Dorsolateral prefrontal cortex (tissue), 120 donors: ENCODE measurements at regions of chr2 and their contacts with region 1.

Region 1: GRCh38 chr2:149313512-149313972 is 16.8 kb upstream of the LYPD6 start:
- DNase-seq: no peak
- H3K4me3 ChIP-seq: peak overlapping the region in 2 of 59 donors; percentile 14 to 32
- H3K27ac ChIP-seq: no peak overlapping the region
- H3K27me3 ChIP-seq: peaks cover 0 to 23% (median 4%) of the 10 kb centered on the region in 45 donors
- CTCF ChIP-seq: peak in 55 of 56 donors; percentile 35 to 78 (median 66)

Region 2: DNA sequence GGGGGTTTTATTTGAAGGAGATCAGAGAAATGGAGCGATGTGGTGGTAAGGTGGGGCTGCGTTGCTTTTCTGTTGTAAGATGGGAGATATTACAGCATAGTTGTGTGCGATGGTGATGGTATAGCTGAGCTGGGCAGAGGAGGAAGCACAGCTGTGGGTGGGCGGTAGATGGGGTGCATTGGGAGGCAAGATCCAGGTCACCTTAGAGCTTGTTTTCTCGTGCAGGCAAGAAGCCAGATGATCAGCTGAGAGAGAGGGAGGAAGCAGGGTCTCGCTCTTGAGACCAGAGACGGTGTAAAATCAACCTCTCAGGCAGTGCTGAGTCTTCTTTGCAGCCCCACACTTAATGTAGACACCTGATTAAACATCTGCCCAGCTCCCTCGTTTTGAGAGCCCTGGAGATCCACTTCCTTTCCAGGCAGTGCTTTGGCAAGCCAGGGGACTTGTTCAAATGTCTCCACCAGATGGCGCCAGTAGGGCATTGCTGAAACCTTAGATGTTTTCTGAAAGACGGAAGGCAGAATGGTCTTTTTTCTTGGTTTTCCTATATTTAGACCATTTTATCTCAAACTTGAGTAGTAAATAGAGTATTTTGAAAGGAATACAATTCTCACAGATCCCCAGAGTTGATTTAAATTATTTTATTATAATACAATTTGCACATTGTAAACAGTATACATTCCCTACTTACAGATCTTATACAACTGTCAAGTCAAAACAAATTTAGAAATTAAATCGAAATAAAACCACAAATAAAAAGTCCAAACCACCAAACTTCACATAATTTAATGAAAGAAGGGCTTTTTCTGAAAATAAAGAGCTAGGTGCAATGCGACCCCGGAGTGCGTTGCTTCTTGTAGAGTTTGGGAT is 296.2 kb before region 1 on chr2:
- intact Hi-C with region 1: loop called in 1 of 2 experiments (anchors 10 kb)
- DNase-seq: peak; percentile 61 to 91 (median 84)
- H3K4me3 ChIP-seq: peak overlapping the region in 1 of 59 donors; percentile 29
- H3K27ac ChIP-seq: peak overlapping the region in 36 of 59 donors; percentile 1 to 77 (median 26)
- H3K27me3 ChIP-seq: no peaks in the 10 kb centered on the region
- CTCF ChIP-seq: peak; percentile 78 to 98 (median 94)